Ovary (tissue), 10 donors: ENCODE measurements at regions of chr11 and their contacts with region 1.

Region 1: GRCh38 chr11:77557554-77557953 is 32.2 kb upstream of the AQP11 start:
- DNase-seq: no peak
- H3K4me3 ChIP-seq: no peak overlapping the region
- H3K27ac ChIP-seq: no peak overlapping the region
- H3K4me1 ChIP-seq: no peaks in the 10 kb centered on the region
- H3K27me3 ChIP-seq: no peaks in the 10 kb centered on the region
- CTCF ChIP-seq: no peak
- EP300 ChIP-seq: no peak
- POLR2A ChIP-seq: no peak

Region 2: GRCh38 chr11:77542296-77542695 is 15.3 kb before region 1 on chr11:
- intact Hi-C with region 1: no loop called
- DNase-seq: no peak
- H3K4me3 ChIP-seq: no peak overlapping the region
- H3K27ac ChIP-seq: no peak overlapping the region
- H3K4me1 ChIP-seq: no peaks in the 10 kb centered on the region
- H3K27me3 ChIP-seq: no peaks in the 10 kb centered on the region
- CTCF ChIP-seq: no peak
- EP300 ChIP-seq: no peak
- POLR2A ChIP-seq: no peak

Region 3: GRCh38 chr11:77619576-77620198 is 62.1 kb after region 1 on chr11:
- intact Hi-C with region 1: loop called in 1 of 4 experiments (anchors 10 kb)
- DNase-seq: no peak
- H3K4me3 ChIP-seq: no peak overlapping the region
- H3K27ac ChIP-seq: no peak overlapping the region
- H3K4me1 ChIP-seq: peaks cover 2% of the 10 kb centered on the region
- H3K27me3 ChIP-seq: no peaks in the 10 kb centered on the region
- CTCF ChIP-seq: peak; percentile 33 to 74 (median 68)
- EP300 ChIP-seq: no peak
- POLR2A ChIP-seq: no peak